ENCODE measurements at regions of chr16 and their contacts with region 1.

Region 1: GRCh38 chr16:69105489-69106361 is at the start of gene HAS3:
- DNase-seq: peak in 5 of 10 donors; percentile 17 to 66 (median 40)
- H3K4me3 ChIP-seq: peak within 1 kb of the TSS; percentile 40 to 74 (median 60)
- H3K27ac ChIP-seq: peak within 1 kb of the TSS in 1 of 59 donors; percentile 36
- H3K27me3 ChIP-seq: peaks cover 0 to 8% (median 0%) of the 10 kb centered on the region in 45 donors
- CTCF ChIP-seq: peak in 38 of 56 donors; percentile 5 to 58 (median 28)
- total RNA-seq, gene HAS3: 1.00 to 5.7 (median 2.7) TPM

Region 2: GRCh38 chr16:69003500-69003899 is 102.2 kb before region 1 on chr16:
- intact Hi-C with region 1: loop called in 1 of 2 experiments (anchors 10 kb)
- DNase-seq: no peak
- H3K4me3 ChIP-seq: no peak overlapping the region
- H3K27ac ChIP-seq: no peak overlapping the region
- H3K27me3 ChIP-seq: no peaks in the 10 kb centered on the region
- CTCF ChIP-seq: no peak

Region 3: GRCh38 chr16:69049146-69049545 is 56.6 kb before region 1 on chr16:
- intact Hi-C with region 1: no loop called
- DNase-seq: no peak
- H3K4me3 ChIP-seq: no peak overlapping the region
- H3K27ac ChIP-seq: no peak overlapping the region
- H3K27me3 ChIP-seq: no peaks in the 10 kb centered on the region
- CTCF ChIP-seq: no peak

Region 4: DNA sequence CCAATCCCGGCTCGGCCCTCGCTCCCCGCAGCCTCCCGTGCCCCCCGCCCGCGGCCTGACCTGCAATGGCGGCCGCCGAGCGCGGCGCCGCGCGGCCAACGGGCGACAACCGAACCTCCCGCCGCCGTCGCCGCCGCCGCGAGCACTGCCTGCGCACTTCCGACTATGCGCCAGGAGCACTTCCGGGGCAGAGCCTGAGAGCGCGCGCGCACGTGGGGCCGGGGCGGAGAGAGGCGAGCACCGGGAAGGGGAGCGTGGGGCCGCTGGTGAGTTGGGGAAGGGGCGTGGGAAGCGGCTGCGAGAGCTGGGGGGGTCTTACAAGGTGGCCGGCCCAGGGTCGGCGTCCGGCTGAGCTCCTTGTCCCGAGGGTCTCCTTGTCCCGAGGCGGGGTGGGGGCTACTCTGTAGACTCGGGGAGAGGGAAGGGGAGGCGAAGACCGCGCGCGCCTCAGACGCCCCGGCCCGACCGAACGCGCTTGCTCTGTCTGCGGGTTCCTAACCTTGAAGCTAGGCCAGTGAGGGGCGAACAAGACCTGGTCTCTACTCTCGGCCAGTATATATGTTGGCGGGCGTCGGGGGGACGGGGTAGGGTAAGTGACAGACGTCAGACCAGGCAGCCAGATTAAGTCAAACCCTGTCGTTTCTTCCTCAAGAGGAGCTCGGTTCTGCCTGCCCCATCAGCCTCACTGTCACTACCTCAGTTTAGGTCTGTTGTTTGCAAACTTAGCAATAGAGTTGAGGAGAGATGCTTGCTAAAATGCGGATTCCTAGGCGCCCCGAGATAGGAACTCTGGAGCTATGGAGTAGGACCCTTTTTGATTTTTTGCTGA is 26.9 kb after region 1 on chr16 and contains the starts of genes CHTF8 and UTP4:
- intact Hi-C with region 1: no loop called
- DNase-seq: peak; percentile 69 to 93 (median 82)
- H3K4me3 ChIP-seq: peak within 1 kb of the TSS; percentile 60 to 99 (median 90)
- H3K27ac ChIP-seq: peak within 1 kb of the TSS in 56 of 59 donors; percentile 30 to 93 (median 86)
- H3K27me3 ChIP-seq: no peaks in the 10 kb centered on the region
- CTCF ChIP-seq: peak in 2 of 56 donors; percentile 10 to 15
- total RNA-seq, gene CHTF8: 40.8 to 90.1 (median 64.5) TPM
- total RNA-seq, gene UTP4: 24.8 to 57.1 (median 40.2) TPM

Region 5: GRCh38 chr16:69166221-69166833 is 60.6 kb after region 1 on chr16:
- intact Hi-C with region 1: no loop called
- DNase-seq: peak in 7 of 10 donors; percentile 50 to 75 (median 63)
- H3K4me3 ChIP-seq: no peak overlapping the region
- H3K27ac ChIP-seq: peak overlapping the region in 48 of 59 donors; percentile 2 to 83 (median 56)
- H3K27me3 ChIP-seq: no peaks in the 10 kb centered on the region
- CTCF ChIP-seq: no peak